Right cardiac atrium (tissue), 5 donors: ENCODE measurements at regions of chr18 and their contacts with region 1.

Region 1: DNA sequence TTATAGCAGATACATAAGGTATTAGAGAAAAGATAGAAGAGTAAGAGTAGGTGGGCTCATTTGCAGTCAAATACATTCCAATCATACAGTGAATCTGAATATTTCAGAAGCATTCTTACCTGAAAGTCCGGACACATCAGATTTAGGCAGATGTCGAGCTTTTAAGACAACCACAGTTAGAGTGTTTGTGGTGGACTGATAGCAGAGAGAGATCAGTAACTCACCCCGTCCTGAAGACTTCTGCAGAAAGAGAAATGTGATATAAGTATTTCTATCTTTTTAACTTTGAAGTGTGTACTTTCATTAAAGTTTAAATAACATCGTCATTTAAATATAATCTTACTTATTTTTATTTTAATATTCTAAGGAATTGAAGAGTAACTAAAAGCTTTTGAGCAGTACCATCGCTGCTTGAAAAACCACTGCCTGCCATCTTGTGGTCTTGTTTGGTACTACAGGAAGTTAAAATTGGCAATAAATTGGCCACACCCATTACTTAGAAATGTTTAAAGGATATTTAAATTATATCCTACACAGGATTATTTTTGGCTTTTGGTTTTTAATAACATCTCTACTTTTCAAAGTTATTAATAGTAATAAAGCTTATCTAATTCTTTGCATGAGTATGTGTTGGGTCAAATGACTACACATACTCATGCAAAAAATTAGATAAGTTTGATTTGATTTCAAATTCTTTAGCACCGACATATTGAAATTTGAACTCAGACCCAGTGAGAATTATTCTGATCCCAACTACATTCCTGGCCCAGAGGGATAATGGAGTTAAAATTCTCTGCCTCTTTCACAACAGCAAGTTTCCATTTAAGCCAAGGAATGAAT is 5.5 kb downstream of the SYT4 start:
- DNase-seq: no peak
- ATAC-seq: no peak
- H3K4me3 ChIP-seq: no peak overlapping the region
- H3K27ac ChIP-seq: no peak overlapping the region
- H3K4me1 ChIP-seq: no peaks in the 10 kb centered on the region
- H3K27me3 ChIP-seq: no peaks in the 10 kb centered on the region

Region 2: GRCh38 chr18:42114310-42114943 is 1157.4 kb before region 1 on chr18:
- intact Hi-C with region 1: loop called in 3 of 4 experiments (anchors 5 to 10 kb)
- DNase-seq: peak; percentile 37 to 73 (median 56)
- ATAC-seq: peak; percentile 83 to 88
- H3K4me3 ChIP-seq: no peak overlapping the region
- H3K27ac ChIP-seq: no peak overlapping the region
- H3K4me1 ChIP-seq: no peaks in the 10 kb centered on the region
- H3K27me3 ChIP-seq: no peaks in the 10 kb centered on the region

Region 3: GRCh38 chr18:42298759-42299675 is 972.8 kb before region 1 on chr18:
- intact Hi-C with region 1: loop called in 2 of 4 experiments (anchors 5 to 10 kb)
- DNase-seq: peak; percentile 72 to 86 (median 76)
- ATAC-seq: peak; percentile 86 to 88
- H3K4me3 ChIP-seq: peak overlapping the region; percentile 30
- H3K27ac ChIP-seq: no peak overlapping the region
- H3K4me1 ChIP-seq: no peaks in the 10 kb centered on the region
- H3K27me3 ChIP-seq: no peaks in the 10 kb centered on the region

Region 4: GRCh38 chr18:42586601-42587000 is 685.2 kb before region 1 on chr18:
- intact Hi-C with region 1: loop called in 1 of 4 experiments (anchors 10 kb)
- DNase-seq: no peak
- ATAC-seq: no peak
- H3K4me3 ChIP-seq: no peak overlapping the region
- H3K27ac ChIP-seq: no peak overlapping the region
- H3K4me1 ChIP-seq: no peaks in the 10 kb centered on the region
- H3K27me3 ChIP-seq: no peaks in the 10 kb centered on the region

Region 5: GRCh38 chr18:43078478-43079092 is 193.2 kb before region 1 on chr18:
- intact Hi-C with region 1: no loop called
- DNase-seq: no peak
- ATAC-seq: no peak
- H3K4me3 ChIP-seq: no peak overlapping the region
- H3K27ac ChIP-seq: no peak overlapping the region
- H3K4me1 ChIP-seq: no peaks in the 10 kb centered on the region
- H3K27me3 ChIP-seq: no peaks in the 10 kb centered on the region

Region 6: GRCh38 chr18:43515481-43515880 is 243.7 kb after region 1 on chr18:
- intact Hi-C with region 1: no loop called
- DNase-seq: no peak
- ATAC-seq: no peak
- H3K4me3 ChIP-seq: no peak overlapping the region
- H3K27ac ChIP-seq: no peak overlapping the region
- H3K4me1 ChIP-seq: no peaks in the 10 kb centered on the region
- H3K27me3 ChIP-seq: no peaks in the 10 kb centered on the region